ENCODE measurements at regions of chr14 and their contacts with region 1.

Region 1: GRCh38 chr14:21476925-21477681 is at the starts of genes RAB2B and TOX4:
- DNase-seq: peak; percentile 99
- H3K4me3 Mint-ChIP-seq: peak within 1 kb of the TSS; percentile 99
- H3K27ac Mint-ChIP-seq: peak within 1 kb of the TSS; percentile 99
- H3K4me1 Mint-ChIP-seq: peaks cover 23% of the 10 kb centered on the region
- H3K27me3 Mint-ChIP-seq: no peaks in the 10 kb centered on the region
- total RNA-seq, gene RAB2B: 26.5 and 30.1 TPM in 2 replicates
- total RNA-seq, gene TOX4: 75.9 and 82.8 TPM in 2 replicates

Region 2: DNA sequence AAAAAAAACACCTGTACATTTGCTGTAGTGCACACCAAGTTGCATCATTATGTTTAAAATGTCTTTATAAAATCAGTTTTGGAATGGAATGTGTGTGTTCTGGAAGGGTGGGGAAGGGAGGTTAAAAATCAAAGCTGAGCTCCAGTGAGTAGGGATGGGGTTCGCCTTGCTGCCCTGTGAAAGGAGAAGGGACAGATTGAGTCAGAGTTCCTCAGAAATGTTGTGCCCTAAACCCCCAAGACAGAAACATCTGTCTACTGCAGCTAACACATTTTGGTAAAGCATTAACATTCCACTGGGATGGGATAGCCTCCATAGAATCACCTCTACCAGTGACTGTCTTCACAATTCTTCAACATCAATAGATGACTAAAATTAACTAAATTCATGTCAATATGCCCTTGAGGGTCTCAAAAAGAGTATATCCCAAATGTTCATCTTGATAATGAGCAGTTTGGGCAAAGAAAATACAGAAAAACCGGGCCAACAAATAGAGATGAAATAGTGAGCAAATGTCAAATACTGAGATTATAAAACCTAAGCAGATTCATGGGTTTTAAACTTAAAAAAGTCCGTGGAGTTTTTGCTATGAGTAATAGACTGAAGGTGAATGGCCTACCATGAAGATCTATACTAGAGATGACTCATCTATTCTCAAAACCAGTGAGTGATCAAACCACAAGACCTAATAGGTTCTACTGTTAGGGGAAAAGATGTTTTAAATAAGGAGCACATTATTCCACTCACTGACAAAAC is 213.3 kb before region 1 on chr14:
- intact Hi-C with region 1: loop called (anchors 1 kb)
- DNase-seq: peak; percentile 64
- H3K4me3 Mint-ChIP-seq: peak overlapping the region; percentile 92
- H3K27ac Mint-ChIP-seq: peak overlapping the region; percentile 97
- H3K4me1 Mint-ChIP-seq: peaks cover 58% of the 10 kb centered on the region
- H3K27me3 Mint-ChIP-seq: no peaks in the 10 kb centered on the region

Region 3: GRCh38 chr14:21399311-21399870 is 77.7 kb before region 1 on chr14:
- intact Hi-C with region 1: no loop called
- DNase-seq: no peak
- H3K4me3 Mint-ChIP-seq: no peak overlapping the region
- H3K27ac Mint-ChIP-seq: no peak overlapping the region
- H3K4me1 Mint-ChIP-seq: no peaks in the 10 kb centered on the region
- H3K27me3 Mint-ChIP-seq: no peaks in the 10 kb centered on the region

Region 4: DNA sequence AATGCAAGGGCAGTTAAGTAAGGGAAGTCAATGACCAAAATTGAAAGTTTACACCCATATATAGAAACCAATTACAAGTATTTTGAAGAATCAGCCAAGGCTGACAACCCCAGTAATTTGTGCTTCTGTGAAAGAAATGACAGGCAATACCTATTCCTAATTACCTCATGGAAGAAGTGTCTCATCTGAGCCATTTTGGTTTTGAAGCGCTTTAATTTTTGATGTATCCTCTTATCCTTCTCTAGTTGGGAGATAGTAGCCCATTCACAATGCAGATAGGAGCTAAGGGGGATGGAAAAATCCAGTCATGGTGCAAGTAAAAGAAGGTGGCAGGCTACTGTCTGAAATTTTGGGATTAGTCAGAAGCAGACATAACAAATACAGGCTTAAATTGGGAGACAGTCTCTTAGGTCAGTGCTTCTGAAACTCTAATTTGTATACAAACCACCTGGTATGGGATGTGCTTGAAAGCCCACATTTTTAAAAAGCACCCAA is 62.9 kb before region 1 on chr14:
- intact Hi-C with region 1: loop called (anchors 1 kb)
- DNase-seq: no peak
- H3K4me3 Mint-ChIP-seq: peak overlapping the region; percentile 11
- H3K27ac Mint-ChIP-seq: peak overlapping the region; percentile 86
- H3K4me1 Mint-ChIP-seq: peaks cover 14% of the 10 kb centered on the region
- H3K27me3 Mint-ChIP-seq: no peaks in the 10 kb centered on the region

Region 5: DNA sequence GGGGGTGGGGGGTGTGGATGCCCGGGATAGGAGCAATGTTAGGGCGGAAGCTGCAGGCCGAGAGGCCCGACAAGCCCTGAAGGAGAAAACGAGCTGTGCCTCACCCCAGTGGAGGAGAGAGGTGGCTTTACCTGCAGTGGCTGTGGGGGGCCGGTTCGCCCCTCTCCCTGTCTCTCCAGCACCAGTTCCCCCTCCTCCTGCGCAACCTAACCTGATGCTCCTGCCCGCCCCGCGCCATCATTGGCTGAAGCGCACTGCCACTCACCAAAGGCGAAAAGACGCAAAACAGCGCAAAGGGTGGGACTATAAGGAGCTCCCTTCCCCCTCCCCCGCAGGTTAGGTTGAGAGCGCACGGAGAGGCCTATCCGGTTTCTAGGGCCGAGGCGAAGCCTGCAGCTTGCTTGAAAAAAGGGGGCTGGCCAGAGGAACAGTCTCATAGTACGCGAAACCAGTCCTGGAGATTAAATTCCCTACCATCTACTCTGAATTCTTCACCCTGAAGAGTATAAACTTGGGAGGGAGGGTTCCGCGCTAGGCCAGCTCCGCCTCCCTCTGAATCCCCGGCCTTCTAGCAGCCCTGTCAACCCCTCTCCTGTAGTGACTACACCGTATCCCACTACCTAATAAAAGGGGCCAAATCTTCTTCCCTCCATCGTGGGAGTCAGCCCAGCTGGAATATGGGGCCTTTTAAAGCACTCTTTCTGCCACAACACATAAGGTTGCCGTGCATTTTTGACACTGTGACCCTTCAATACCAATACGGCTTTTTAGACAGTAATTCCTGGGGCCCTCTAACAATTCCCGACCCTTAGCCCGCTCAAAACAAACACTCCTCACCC is 39.8 kb before region 1 on chr14:
- intact Hi-C with region 1: loop called (anchors 1 kb)
- DNase-seq: peak; percentile 100
- H3K4me3 Mint-ChIP-seq: peak overlapping the region; percentile 90
- H3K27ac Mint-ChIP-seq: peak overlapping the region; percentile 77
- H3K4me1 Mint-ChIP-seq: peaks cover 50% of the 10 kb centered on the region
- H3K27me3 Mint-ChIP-seq: no peaks in the 10 kb centered on the region

Region 6: DNA sequence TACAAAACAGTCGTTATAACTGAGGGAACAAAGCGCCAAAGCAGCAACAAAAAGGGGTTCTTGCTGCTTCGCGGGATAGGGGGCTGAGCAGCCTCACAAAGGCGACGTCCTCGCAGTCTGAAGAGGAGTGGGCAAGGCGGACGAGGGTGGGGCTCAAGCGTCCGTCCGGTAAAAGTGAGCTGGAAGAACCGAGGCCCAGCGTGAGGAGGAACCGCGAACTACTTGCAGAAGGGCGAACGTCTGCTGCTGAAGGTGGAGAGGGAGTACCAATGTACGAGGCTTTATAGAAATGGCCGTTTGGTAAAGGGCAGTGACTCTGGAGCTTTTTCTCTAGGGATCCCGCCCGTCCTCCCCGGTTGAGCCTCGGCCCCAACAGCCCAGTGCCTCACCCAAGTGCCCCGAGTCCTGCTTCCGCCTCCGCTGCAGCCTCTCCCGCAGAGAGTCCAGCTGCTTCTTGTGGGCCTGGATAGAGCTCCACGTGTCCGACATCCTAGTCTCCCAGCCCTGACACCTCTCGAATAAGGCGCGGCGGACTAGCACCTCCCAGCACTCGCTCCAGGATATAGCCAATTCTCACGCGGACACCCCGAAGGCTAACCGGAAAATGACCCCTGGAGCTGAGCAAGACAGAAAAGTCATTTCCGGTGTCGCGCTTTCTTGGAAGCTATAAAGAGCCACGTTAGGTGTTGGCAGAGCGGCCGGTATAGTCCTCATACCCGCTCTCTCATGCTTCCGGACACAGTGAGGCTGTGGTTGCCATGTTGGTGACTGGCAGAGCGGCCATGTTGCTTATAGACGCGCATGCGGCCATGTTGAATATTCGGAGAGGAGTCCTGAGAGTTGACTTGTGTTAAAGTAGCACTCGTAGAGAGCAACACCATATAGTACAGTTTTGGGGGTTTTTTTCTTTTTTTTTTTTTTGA is 33.9 kb after region 1 on chr14 and contains the start of gene METTL3:
- intact Hi-C with region 1: loop called (anchors 1 kb)
- DNase-seq: peak; percentile 98
- H3K4me3 Mint-ChIP-seq: peak within 1 kb of the TSS; percentile 99
- H3K27ac Mint-ChIP-seq: peak within 1 kb of the TSS; percentile 98
- H3K4me1 Mint-ChIP-seq: peaks cover 28% of the 10 kb centered on the region
- H3K27me3 Mint-ChIP-seq: peaks cover 4% of the 10 kb centered on the region
- total RNA-seq, gene METTL3: 72.9 and 81.7 TPM in 2 replicates

Region 7: GRCh38 chr14:21557084-21557901 is 80.2 kb after region 1 on chr14:
- intact Hi-C with region 1: loop called (anchors 1 kb)
- DNase-seq: peak; percentile 93
- H3K4me3 Mint-ChIP-seq: peak overlapping the region; percentile 41
- H3K27ac Mint-ChIP-seq: no peak overlapping the region
- H3K4me1 Mint-ChIP-seq: peaks cover 5% of the 10 kb centered on the region
- H3K27me3 Mint-ChIP-seq: no peaks in the 10 kb centered on the region

Region 8: GRCh38 chr14:21711360-21711961 is 234.4 kb after region 1 on chr14:
- intact Hi-C with region 1: no loop called
- DNase-seq: peak; percentile 72
- H3K4me3 Mint-ChIP-seq: no peak overlapping the region
- H3K27ac Mint-ChIP-seq: no peak overlapping the region
- H3K4me1 Mint-ChIP-seq: peaks cover 2% of the 10 kb centered on the region
- H3K27me3 Mint-ChIP-seq: peaks cover 19% of the 10 kb centered on the region

Measured in activated CD4-positive, alpha-beta T cell treated with anti-CD3 and anti-CD28 coated beads, Interleukin-2, amount 10 ng/mL, durations not matched to agents 24 days and 14 days (primary cell).